ENCODE measurements at regions of chr1 and their contacts with region 1.

Region 1: GRCh38 chr1:228405987-228406265 is 709 bp downstream of the TRIM11 start:
- DNase-seq: no peak
- H3K4me3 ChIP-seq: peak overlapping the region; percentile 85
- H3K4me3 Mint-ChIP-seq: peak overlapping the region; percentile 80 to 95 (median 93)
- H3K27ac ChIP-seq: peak overlapping the region; percentile 84
- H3K27ac Mint-ChIP-seq: peak overlapping the region in 7 of 8 donors; percentile 81 to 93 (median 87)
- H3K4me1 ChIP-seq: peaks cover 55% of the 10 kb centered on the region
- H3K4me1 Mint-ChIP-seq: peaks cover 53 to 79% (median 67%) of the 10 kb centered on the region in 3 donors
- H3K27me3 ChIP-seq: no peaks in the 10 kb centered on the region
- H3K27me3 Mint-ChIP-seq: peaks cover 0 to 5% of the 10 kb centered on the region in 2 donors

Region 2: DNA sequence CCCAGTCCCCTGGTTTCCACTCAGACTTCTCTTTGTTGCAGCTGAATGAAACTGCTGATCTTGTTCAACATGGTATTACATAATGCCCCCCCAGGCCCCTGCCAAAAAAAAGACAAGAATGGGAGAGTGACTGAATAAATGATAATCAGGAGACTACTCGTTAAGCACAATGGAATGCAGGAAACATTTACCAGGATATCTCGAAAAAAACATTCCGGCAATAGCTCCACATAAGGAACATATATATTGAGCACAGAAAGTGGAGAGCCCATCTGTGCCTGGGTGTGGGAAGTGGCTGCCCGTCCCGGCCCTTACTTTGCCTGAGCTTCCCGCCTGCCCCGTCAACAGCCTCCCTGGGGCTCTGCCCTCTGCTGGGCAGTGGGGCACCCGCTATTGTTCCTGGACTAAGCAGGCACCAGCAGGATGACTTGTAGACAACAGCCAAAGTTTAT is 12.7 kb before region 1 on chr1:
- CTCF ChIA-PET with region 1: interaction called, 3 read pairs
- POLR2A ChIA-PET with region 1: interaction called, 11 read pairs
- DNase-seq: no peak
- H3K4me3 ChIP-seq: no peak overlapping the region
- H3K4me3 Mint-ChIP-seq: no peak overlapping the region
- H3K27ac ChIP-seq: no peak overlapping the region
- H3K27ac Mint-ChIP-seq: peak overlapping the region in 3 of 8 donors; percentile 15 to 46 (median 27)
- H3K4me1 ChIP-seq: peaks cover 9% of the 10 kb centered on the region
- H3K4me1 Mint-ChIP-seq: peaks cover 8 to 10% (median 10%) of the 10 kb centered on the region in 3 donors
- H3K27me3 ChIP-seq: no peaks in the 10 kb centered on the region
- H3K27me3 Mint-ChIP-seq: no peaks in the 10 kb centered on the region

Region 3: GRCh38 chr1:228420963-228421826 is 15.3 kb after region 1 on chr1:
- CTCF ChIA-PET with region 1: interaction called, 4 read pairs
- POLR2A ChIA-PET with region 1: interaction called, 10 read pairs
- DNase-seq: no peak
- H3K4me3 ChIP-seq: no peak overlapping the region
- H3K4me3 Mint-ChIP-seq: no peak overlapping the region
- H3K27ac ChIP-seq: no peak overlapping the region
- H3K27ac Mint-ChIP-seq: no peak overlapping the region
- H3K4me1 ChIP-seq: peaks cover 12% of the 10 kb centered on the region
- H3K4me1 Mint-ChIP-seq: peaks cover 0 to 11% (median 6%) of the 10 kb centered on the region in 3 donors
- H3K27me3 ChIP-seq: no peaks in the 10 kb centered on the region
- H3K27me3 Mint-ChIP-seq: peaks cover 0 to 4% of the 10 kb centered on the region in 2 donors

Region 4: DNA sequence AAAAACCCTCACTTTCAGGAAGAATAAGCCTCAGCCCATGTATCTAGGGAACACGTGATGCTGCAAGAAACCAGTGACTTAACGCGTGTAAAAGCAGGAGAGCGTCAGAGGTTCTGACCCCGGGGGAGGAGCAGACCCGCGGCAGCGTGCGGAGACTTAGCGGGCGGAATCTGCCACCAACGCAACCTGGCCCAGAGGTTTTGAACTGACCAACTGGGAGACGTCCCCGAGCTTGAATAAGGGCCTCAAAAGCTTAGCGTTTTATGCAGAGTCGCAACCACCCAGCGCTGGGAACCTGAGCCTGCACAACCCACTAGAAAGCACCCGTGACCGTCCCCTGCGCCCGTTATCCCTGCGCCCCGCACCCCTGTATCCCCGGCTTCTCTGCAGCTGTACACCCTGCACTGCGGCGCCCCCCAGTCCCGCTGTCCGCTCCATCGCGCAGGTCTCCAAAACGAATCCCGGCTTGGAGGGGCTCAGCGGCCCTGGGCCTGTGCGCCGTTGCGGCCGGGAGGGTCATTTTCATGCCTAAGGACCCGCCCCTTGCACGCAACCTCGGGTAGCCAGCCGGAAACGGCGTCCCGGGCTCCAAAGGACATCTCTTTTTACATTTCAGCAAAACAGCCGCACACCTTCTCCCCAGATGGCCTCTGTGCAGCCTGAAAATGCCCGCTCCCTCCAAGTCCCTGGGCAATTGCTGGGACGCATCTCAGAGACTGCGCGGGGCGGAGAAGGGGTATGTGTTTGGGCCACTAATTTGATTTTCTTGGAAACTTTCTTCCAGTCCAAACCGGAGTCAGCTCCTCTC is 40.1 kb after region 1 on chr1:
- CTCF ChIA-PET with region 1: no interaction called
- POLR2A ChIA-PET with region 1: no interaction called
- DNase-seq: peak in 2 of 5 donors; percentile 14 to 20
- H3K4me3 ChIP-seq: peak overlapping the region; percentile 38
- H3K4me3 Mint-ChIP-seq: peak overlapping the region; percentile 74 to 90 (median 82)
- H3K27ac ChIP-seq: no peak overlapping the region
- H3K27ac Mint-ChIP-seq: peak overlapping the region in 3 of 8 donors; percentile 17 to 58 (median 32)
- H3K4me1 ChIP-seq: peaks cover 13% of the 10 kb centered on the region
- H3K4me1 Mint-ChIP-seq: peaks cover 11 to 15% (median 11%) of the 10 kb centered on the region in 3 donors
- H3K27me3 ChIP-seq: peaks cover 29% of the 10 kb centered on the region
- H3K27me3 Mint-ChIP-seq: peaks cover 43 to 53% of the 10 kb centered on the region in 2 donors

Region 5: DNA sequence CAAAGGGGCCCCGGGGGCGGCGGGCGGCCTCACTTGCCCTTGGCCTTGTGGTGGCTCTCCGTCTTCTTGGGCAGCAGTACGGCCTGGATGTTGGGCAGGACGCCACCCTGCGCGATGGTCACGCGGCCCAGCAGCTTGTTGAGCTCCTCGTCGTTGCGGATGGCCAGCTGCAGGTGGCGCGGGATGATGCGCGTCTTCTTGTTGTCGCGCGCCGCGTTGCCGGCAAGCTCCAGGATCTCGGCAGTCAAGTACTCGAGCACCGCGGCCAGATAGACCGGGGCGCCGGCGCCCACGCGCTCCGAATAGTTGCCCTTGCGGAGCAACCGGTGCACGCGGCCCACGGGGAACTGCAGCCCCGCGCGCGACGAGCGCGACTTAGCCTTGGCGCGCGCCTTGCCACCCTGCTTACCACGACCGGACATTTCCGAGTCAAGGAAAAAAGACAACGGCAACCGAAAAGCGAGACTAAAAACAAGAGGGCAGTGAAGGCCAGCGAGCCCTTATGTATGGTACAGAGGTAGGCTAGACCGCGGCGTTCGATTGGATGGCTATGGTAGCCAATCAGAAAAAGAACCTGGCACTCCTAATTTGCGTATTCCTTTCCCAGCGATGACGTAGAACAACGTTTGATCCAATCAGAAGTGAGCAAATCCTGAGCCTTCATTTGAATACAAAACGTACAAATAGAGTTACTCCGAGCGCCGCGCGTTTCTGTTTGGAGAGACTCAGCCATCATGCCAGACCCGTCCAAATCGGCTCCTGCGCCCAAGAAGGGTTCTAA is 51.7 kb after region 1 on chr1:
- CTCF ChIA-PET with region 1: interaction called, 9 read pairs
- POLR2A ChIA-PET with region 1: interaction called, 28 read pairs
- DNase-seq: peak; percentile 70 to 93 (median 87)
- H3K4me3 ChIP-seq: peak overlapping the region; percentile 87
- H3K4me3 Mint-ChIP-seq: peak overlapping the region; percentile 91 to 99 (median 96)
- H3K27ac ChIP-seq: peak overlapping the region; percentile 95
- H3K27ac Mint-ChIP-seq: peak overlapping the region; percentile 98 to 100 (median 99)
- H3K4me1 ChIP-seq: peaks cover 34% of the 10 kb centered on the region
- H3K4me1 Mint-ChIP-seq: peaks cover 41 to 60% (median 53%) of the 10 kb centered on the region in 3 donors
- H3K27me3 ChIP-seq: no peaks in the 10 kb centered on the region
- H3K27me3 Mint-ChIP-seq: peaks cover 0 to 9% of the 10 kb centered on the region in 2 donors